ENCODE measurements at regions of chr19 and their contacts with region 1.

Region 1: GRCh38 chr19:42207767-42208271 is 9.7 kb downstream of the DEDD2 start:
- DNase-seq: no peak
- ATAC-seq: no peak
- H3K4me3 Mint-ChIP-seq: peak overlapping the region; percentile 14
- H3K27ac Mint-ChIP-seq: peak overlapping the region; percentile 61
- H3K4me1 Mint-ChIP-seq: peaks cover 30% of the 10 kb centered on the region
- H3K27me3 Mint-ChIP-seq: no peaks in the 10 kb centered on the region

Region 2: DNA sequence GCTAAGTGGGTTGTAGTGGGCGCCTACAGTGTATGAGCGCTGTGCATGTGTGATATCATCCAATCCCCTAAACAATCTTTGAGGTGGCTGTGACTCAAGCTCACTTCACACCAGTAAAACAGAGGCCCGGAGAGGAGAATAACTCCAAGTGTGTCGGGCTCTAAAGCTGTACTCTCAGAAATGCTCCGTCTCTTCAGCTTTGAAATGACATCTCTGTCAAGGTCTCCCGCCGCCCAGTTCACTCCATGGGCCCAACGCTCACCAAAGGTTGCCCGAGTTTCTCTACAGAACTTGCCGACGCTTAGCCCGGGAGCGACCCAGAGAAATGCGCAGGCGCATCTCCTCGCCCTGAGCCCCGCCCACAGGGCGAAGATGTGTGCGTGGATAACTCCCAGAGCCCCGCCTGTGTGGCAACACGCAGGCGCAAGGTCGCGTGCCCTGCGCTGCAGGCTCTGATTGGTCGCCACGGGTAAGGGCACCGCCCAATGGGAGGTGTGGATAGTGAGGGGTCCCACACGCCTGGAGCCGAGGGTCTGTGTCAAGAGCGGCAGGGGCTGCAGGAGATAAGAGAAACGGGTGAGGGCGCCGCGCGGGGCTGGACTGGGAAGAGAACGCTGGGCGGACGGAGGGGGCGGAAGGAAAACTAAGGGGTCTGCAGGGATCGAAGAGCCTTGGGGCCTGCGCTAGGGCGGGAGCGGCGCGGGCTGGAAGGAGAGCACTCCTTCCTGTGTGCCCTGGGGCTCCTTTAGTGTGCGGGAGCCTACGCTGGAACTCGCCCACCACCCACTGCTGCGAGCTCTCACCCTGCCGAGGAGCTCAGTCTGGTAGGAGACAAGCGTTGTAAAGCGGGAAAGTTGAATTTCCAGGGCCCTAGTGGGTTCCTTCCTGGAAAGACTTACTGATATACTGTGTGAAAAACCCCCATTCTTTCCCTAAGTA is 12.3 kb after region 1 on chr19 and contains the start of gene ZNF526:
- POLR2A ChIA-PET with region 1: interaction called, 18 read pairs
- DNase-seq: peak; percentile 97
- ATAC-seq: peak; percentile 82
- H3K4me3 Mint-ChIP-seq: peak within 1 kb of the TSS; percentile 97
- H3K27ac Mint-ChIP-seq: peak within 1 kb of the TSS; percentile 95
- H3K4me1 Mint-ChIP-seq: peaks cover 40% of the 10 kb centered on the region
- H3K27me3 Mint-ChIP-seq: no peaks in the 10 kb centered on the region
- total RNA-seq, gene ZNF526: 19.6 to 20.6 TPM

Measured in activated naive CD8-positive, alpha-beta T cell treated with anti-CD3 and anti-CD28 coated beads, Interleukin-2, amount 10 ng/mL, durations not matched to agents 7 days and 5 days (primary cell).